Heart right ventricle (tissue), 16 donors: ENCODE measurements at regions of chr2 and their contacts with region 1.

Region 1: DNA sequence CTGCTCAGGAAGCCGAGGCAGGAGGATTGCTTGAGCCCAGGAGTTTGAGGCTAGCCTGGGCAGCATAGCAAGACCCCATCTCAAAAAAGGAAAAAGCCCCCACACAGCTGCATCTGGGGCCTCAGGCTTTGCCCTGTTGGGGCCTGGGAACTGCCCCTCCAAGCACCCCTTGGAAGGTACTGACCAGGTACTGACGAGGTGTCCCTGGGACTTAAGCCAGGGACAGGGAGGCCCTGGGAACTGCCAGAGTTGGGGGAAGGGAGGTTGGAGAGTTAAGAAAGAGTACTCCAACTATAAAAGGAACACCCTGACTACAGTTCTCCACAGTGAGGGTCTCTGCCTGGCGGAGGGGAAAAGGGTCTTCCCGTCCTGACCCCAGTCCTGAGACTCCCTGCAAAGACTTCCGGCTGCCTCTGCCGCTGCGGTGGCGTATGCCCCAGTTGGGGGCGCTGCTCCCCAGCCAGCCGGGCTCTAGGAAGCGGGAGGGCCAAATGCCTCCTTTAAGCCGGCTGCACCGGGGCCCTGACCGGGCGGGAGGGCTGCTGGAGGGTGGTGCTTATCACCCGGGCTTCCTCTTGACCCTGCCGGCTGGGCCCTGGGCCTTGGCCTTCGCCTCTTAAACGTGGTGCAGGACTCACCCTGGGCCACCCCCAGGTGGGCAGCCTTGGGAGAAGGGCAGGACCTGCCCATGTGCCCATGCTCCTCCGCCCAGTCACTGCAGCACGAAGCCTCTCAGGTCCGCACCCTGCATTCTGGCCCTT is 12.8 kb downstream of the SLC30A3 start:
- DNase-seq: peak; percentile 45 to 64
- ATAC-seq: peak; percentile 71 to 87 (median 79)
- H3K4me3 ChIP-seq: peak overlapping the region in 1 of 10 donors; percentile 10
- H3K27ac ChIP-seq: no peak overlapping the region
- H3K4me1 ChIP-seq: peaks cover 0 to 20% (median 9%) of the 10 kb centered on the region in 9 donors
- H3K27me3 ChIP-seq: peaks cover 0 to 43% (median 22%) of the 10 kb centered on the region in 7 donors
- CTCF ChIP-seq: peak; percentile 40 to 81 (median 75)

Region 2: DNA sequence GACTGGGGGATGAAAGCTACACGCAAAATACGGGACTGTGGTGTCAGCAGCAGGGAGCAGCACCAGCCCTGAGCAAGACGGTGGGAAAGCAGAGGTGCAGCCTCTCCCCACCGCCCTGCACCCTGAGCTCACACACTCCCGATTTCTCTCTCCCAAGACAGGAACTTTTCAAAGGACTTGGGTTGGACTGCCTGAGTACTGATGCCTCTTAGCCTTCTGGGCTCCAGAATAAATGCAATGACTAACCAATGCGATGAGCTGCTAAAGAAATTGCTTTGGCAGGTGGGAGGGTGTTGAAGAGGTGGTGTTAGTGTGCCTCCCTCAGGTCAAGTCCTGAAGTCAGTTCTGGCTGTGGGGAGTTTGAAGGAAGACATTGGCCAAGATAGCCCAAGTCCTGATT is 41.8 kb after region 1 on chr2:
- intact Hi-C with region 1: loop called in 2 of 10 experiments (anchors 5 kb)
- DNase-seq: no peak
- ATAC-seq: peak in 7 of 8 donors; percentile 26 to 67 (median 46)
- H3K4me3 ChIP-seq: no peak overlapping the region
- H3K27ac ChIP-seq: peak overlapping the region in 1 of 10 donors; percentile 25
- H3K4me1 ChIP-seq: peaks cover 3 to 97% (median 34%) of the 10 kb centered on the region in 9 donors
- H3K27me3 ChIP-seq: peaks cover 0 to 18% (median 0%) of the 10 kb centered on the region in 7 donors
- CTCF ChIP-seq: peak in 2 of 9 donors; percentile 20 to 28

Region 3: GRCh38 chr2:27303093-27304025 is 53.3 kb after region 1 on chr2:
- intact Hi-C with region 1: loop called in 4 of 10 experiments (anchors 5 to 10 kb)
- DNase-seq: peak; percentile 21 to 65
- ATAC-seq: peak; percentile 16 to 81 (median 66)
- H3K4me3 ChIP-seq: peak overlapping the region in 8 of 10 donors; percentile 2 to 49 (median 30)
- H3K27ac ChIP-seq: peak overlapping the region in 8 of 10 donors; percentile 8 to 63 (median 54)
- H3K4me1 ChIP-seq: peaks cover 3 to 43% (median 23%) of the 10 kb centered on the region in 9 donors
- H3K27me3 ChIP-seq: peaks cover 0 to 37% (median 31%) of the 10 kb centered on the region in 7 donors
- CTCF ChIP-seq: peak; percentile 75 to 94 (median 89)